Heart right ventricle (tissue), 16 donors: ENCODE measurements at regions of chr5 and their contacts with region 1.

Region 1: GRCh38 chr5:59328709-59329296 is 564.7 kb downstream of the PDE4D start:
- DNase-seq: peak in 1 of 2 donors; percentile 20
- ATAC-seq: peak; percentile 29 to 81 (median 76)
- H3K4me3 ChIP-seq: peak overlapping the region in 1 of 10 donors; percentile 8
- H3K27ac ChIP-seq: peak overlapping the region in 4 of 10 donors; percentile 1 to 58 (median 13)
- H3K4me1 ChIP-seq: peaks cover 0 to 47% (median 26%) of the 10 kb centered on the region in 9 donors
- H3K27me3 ChIP-seq: no peaks in the 10 kb centered on the region
- CTCF ChIP-seq: no peak

Region 2: GRCh38 chr5:59287320-59287719 is 41.5 kb before region 1 on chr5:
- intact Hi-C with region 1: loop called in 1 of 10 experiments (anchors 5 kb)
- DNase-seq: no peak
- ATAC-seq: peak in 2 of 8 donors; percentile 18 to 34
- H3K4me3 ChIP-seq: no peak overlapping the region
- H3K27ac ChIP-seq: peak overlapping the region in 1 of 10 donors; percentile 67
- H3K4me1 ChIP-seq: peaks cover 0 to 27% (median 0%) of the 10 kb centered on the region in 9 donors
- H3K27me3 ChIP-seq: no peaks in the 10 kb centered on the region
- CTCF ChIP-seq: no peak